ENCODE measurements at regions of chr1 and their contacts with region 1.

Region 1: GRCh38 chr1:155001675-155002463 is 733 bp upstream of the ZBTB7B start:
- DNase-seq: peak; percentile 100
- H3K4me3 Mint-ChIP-seq: peak overlapping the region; percentile 94
- H3K27ac Mint-ChIP-seq: peak overlapping the region; percentile 93
- H3K4me1 Mint-ChIP-seq: peaks cover 54% of the 10 kb centered on the region
- H3K27me3 Mint-ChIP-seq: no peaks in the 10 kb centered on the region
- CTCF ChIP-seq: peak; percentile 40

Region 2: GRCh38 chr1:154961497-154962262 is 40.2 kb before region 1 on chr1 and contains the start of gene PYGO2:
- CTCF ChIA-PET with region 1: interaction called, 15 read pairs
- intact Hi-C with region 1: no loop called
- DNase-seq: peak; percentile 91
- H3K4me3 Mint-ChIP-seq: peak within 1 kb of the TSS; percentile 85
- H3K27ac Mint-ChIP-seq: peak within 1 kb of the TSS; percentile 92
- H3K4me1 Mint-ChIP-seq: peaks cover 43% of the 10 kb centered on the region
- H3K27me3 Mint-ChIP-seq: no peaks in the 10 kb centered on the region
- CTCF ChIP-seq: peak; percentile 84
- total RNA-seq, gene PYGO2: 43.6 and 45.6 TPM in 2 replicates

Region 3: DNA sequence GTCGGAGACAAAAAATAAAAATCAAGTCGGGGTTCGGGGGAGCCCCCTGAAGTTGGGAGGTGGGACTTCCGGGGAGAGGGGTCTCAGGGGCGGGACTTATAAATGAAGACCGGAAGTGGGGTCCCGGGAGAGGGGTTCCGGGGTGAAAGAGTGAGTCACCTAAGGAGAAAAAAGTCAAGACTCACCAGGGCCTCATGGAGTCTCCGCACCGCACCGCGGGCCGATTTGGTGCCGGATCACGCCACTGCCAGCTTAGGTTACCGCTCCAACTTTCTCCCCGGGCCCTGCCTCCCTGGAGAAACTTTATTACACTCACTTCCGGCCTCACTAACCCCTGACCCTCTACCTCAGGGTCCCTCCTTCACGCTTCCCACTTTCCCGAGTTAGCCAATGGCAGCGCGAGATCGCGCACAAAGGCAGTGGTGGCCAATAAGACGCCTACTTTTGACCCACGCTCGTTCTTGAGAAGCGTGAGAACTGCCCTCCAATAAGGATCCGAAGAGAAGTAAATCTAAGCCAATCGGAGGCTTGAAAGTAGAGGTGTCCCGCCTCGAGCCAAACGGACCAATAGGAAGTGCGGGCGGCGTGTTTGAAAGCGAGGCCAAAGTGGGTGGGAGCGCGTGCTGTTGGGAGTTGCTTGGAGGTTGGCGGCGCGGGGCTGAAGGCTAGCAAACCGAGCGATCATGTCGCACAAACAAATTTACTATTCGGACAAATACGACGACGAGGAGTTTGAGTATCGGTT is 27.6 kb before region 1 on chr1 and contains the start of gene CKS1B:
- CTCF ChIA-PET with region 1: interaction called, 7 read pairs
- intact Hi-C with region 1: loop called (anchors 1 kb)
- DNase-seq: peak; percentile 96
- H3K4me3 Mint-ChIP-seq: no peak within 1 kb of the TSS
- H3K27ac Mint-ChIP-seq: no peak within 1 kb of the TSS
- H3K4me1 Mint-ChIP-seq: peaks cover 33% of the 10 kb centered on the region
- H3K27me3 Mint-ChIP-seq: no peaks in the 10 kb centered on the region
- CTCF ChIP-seq: no peak
- total RNA-seq, gene CKS1B: 182 and 230 TPM in 2 replicates

Region 4: GRCh38 chr1:154982897-154983648 is 18.8 kb before region 1 on chr1 and contains the start of gene FLAD1:
- CTCF ChIA-PET with region 1: interaction called, 11 read pairs
- intact Hi-C with region 1: no loop called
- DNase-seq: peak; percentile 99
- H3K4me3 Mint-ChIP-seq: no peak within 1 kb of the TSS
- H3K27ac Mint-ChIP-seq: no peak within 1 kb of the TSS
- H3K4me1 Mint-ChIP-seq: peaks cover 7% of the 10 kb centered on the region
- H3K27me3 Mint-ChIP-seq: no peaks in the 10 kb centered on the region
- CTCF ChIP-seq: no peak
- total RNA-seq, gene FLAD1: 74.3 and 75.1 TPM in 2 replicates

Region 5: GRCh38 chr1:155017041-155017945 is 15.4 kb after region 1 on chr1:
- CTCF ChIA-PET with region 1: interaction called, 11 read pairs
- intact Hi-C with region 1: loop called (anchors 2 kb)
- DNase-seq: peak; percentile 96
- H3K4me3 Mint-ChIP-seq: peak overlapping the region; percentile 60
- H3K27ac Mint-ChIP-seq: peak overlapping the region; percentile 79
- H3K4me1 Mint-ChIP-seq: peaks cover 37% of the 10 kb centered on the region
- H3K27me3 Mint-ChIP-seq: no peaks in the 10 kb centered on the region
- CTCF ChIP-seq: peak; percentile 99

Region 6: DNA sequence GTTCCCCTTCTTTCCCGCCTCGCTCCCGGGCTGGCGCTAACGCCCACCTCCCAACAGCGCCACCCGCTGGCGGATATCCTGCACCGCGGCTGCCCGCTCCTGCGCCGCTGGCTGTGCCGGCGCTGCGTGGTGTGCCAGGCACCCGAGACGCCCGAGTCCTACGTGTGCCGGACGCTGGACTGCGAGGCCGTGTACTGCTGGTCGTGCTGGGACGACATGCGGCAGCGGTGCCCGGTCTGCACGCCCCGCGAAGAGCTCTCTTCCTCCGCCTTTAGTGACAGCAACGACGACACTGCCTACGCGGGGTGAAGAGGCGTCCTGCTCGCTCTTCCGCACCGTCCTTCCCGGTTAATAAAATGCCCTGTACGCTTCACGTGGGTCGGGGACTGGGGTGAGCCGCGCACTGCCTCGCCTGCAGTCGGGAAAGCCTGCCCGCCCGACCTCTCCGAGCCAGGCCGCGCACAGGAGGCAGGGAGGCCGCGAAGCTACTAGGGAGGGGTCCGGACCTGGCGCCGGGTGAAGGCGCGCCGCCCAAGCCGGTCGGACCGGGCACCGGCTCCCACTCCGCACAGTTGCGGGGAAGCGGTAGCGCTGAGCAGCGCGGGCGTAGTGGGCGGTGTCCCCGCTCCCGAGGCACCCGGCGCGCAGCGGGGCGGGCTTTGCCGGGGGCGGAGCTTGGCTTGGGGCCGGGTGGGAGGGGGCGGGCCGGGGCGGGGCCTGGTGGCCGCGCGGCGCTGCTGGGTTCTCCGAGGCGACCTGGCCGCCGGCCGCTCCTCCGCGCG is 48.9 kb after region 1 on chr1 and contains the start of gene ADAM15:
- CTCF ChIA-PET with region 1: interaction called, 3 read pairs
- intact Hi-C with region 1: loop called (anchors 10 kb)
- DNase-seq: peak; percentile 94
- H3K4me3 Mint-ChIP-seq: peak within 1 kb of the TSS; percentile 91
- H3K27ac Mint-ChIP-seq: peak within 1 kb of the TSS; percentile 68
- H3K4me1 Mint-ChIP-seq: peaks cover 26% of the 10 kb centered on the region
- H3K27me3 Mint-ChIP-seq: no peaks in the 10 kb centered on the region
- CTCF ChIP-seq: peak; percentile 97
- total RNA-seq, gene ADAM15: 99.1 and 103 TPM in 2 replicates

Region 7: DNA sequence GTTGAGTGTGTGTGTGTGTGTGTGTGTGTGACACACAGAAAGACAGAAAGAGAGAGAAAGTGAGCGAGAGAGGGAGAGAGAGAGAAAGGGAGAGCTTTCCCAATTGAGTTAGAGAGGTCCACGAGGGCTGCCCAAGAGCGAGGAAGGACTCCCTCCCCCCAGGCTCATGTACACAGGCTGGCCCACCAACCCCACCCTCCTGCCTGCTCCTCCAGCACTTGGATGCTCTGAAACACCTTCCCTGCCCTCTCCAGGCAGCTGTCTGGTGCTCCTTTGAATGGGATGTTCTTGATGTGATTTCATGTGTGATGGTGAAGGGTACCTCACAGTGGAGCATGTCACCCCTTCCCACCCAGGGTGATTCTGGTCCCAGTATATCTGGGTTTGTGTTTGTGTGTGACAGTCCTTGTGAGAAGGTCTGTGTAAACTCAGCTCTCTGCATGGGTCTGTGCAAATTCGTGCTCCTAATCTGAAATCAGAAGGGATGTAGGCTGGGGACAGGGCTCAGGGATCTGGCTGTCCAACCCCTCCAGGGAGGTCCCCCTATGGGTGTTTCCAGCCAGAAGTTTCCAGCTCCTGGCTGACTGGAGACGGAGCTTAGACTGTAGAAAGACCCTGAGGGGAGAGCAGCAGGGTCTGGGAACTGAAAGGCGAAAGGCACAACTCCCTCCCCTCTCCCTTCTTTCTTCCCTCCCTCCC is 1884.9 kb after region 1 on chr1:
- CTCF ChIA-PET with region 1: interaction called, 10 read pairs
- intact Hi-C with region 1: no loop called
- DNase-seq: no peak
- H3K4me3 Mint-ChIP-seq: no peak overlapping the region
- H3K27ac Mint-ChIP-seq: no peak overlapping the region
- H3K4me1 Mint-ChIP-seq: no peaks in the 10 kb centered on the region
- H3K27me3 Mint-ChIP-seq: peaks cover 100% of the 10 kb centered on the region
- CTCF ChIP-seq: no peak